Activated CD4-positive, alpha-beta T cell treated with anti-CD3 and anti-CD28 coated beads, Interleukin-2, amount 10 ng/mL, durations not matched to agents 7 days and 5 days (primary cell): ENCODE measurements at regions of chr14 and their contacts with region 1.

Region 1: DNA sequence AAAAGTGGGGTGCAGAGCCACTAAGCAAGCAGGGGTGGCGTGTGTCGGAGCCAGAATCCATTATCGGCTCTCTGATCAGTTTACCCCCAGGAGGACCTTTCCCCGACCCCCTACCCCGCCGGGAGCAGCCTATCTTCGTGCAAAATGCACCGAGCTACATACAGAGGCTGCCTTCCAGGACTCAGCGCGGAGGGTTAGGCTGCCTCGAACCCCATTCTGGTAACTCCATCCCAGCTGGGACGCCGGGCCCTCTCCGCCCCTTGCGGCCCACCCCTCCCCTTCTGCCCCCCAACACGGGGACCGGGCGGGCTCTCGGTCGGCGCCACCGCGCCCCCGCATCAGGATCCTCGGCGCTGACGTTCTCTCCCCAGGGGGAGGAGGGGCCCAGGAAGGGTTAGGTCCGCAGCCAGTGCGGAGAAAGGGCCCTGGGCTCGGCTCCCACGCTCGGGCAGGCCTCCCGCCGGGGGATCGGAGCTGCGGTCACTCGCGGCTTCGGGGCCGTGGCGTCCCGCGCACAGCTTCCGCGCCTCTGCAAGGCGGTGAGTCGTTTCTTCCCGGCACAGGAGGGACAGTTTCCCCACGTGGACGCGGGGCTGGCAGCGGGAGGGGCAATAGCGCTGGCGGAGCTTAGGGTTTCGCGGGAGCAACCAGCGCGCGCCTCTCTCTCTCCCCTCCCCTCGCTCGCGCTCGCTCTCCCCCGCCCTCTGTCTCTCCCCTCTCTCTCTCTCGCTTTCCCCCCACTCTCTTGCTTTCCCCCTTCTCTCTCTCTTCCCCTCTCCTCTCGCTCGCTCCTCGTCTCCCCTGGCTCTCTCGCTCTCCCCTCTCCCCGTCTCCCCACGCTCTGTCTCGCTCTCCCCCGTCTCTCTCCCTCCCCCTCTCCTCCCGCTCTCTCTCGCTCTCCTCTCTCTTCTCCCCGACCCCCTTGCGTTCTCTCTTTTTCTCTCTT is 12.5 kb upstream of the MAP3K9 start:
- DNase-seq: peak; percentile 49
- H3K4me3 Mint-ChIP-seq: peak overlapping the region; percentile 80
- H3K27ac Mint-ChIP-seq: no peak overlapping the region
- H3K4me1 Mint-ChIP-seq: peaks cover 27% of the 10 kb centered on the region
- H3K27me3 Mint-ChIP-seq: peaks cover 37% of the 10 kb centered on the region

Region 2: GRCh38 chr14:70809543-70810244 is 12.2 kb before region 1 on chr14:
- CTCF ChIA-PET with region 1: interaction called, 38 read pairs
- POLR2A ChIA-PET with region 1: no interaction called
- DNase-seq: peak; percentile 92
- H3K4me3 Mint-ChIP-seq: no peak overlapping the region
- H3K27ac Mint-ChIP-seq: peak overlapping the region; percentile 85
- H3K4me1 Mint-ChIP-seq: peaks cover 12% of the 10 kb centered on the region
- H3K27me3 Mint-ChIP-seq: peaks cover 4% of the 10 kb centered on the region

Region 3: DNA sequence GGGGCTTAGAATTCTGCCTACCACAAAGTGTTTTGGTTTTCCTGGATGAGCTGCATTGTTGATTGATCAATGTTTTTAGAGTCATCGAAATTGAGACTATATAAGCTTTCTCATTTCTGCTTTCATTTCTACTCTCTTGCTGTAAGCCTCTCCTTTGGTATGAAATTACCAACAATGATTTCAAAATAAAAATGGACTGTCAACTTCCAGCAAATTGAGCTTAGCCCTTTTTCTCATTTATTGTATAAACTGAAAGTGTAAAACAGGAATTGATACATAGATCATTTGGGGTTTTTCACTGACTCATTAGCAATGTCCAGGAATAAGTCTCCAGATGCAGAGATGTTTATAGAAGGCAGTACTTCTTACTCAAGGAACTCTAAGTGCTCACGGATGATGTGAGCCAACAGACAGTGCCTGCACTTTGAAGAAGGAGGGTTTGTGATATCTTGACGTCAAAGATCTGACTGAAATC is 65.4 kb after region 1 on chr14:
- CTCF ChIA-PET with region 1: interaction called, 10 read pairs
- POLR2A ChIA-PET with region 1: no interaction called
- DNase-seq: no peak
- H3K4me3 Mint-ChIP-seq: peak overlapping the region; percentile 66
- H3K27ac Mint-ChIP-seq: peak overlapping the region; percentile 95
- H3K4me1 Mint-ChIP-seq: peaks cover 93% of the 10 kb centered on the region
- H3K27me3 Mint-ChIP-seq: no peaks in the 10 kb centered on the region